Caco-2 (cell line): ENCODE measurements at regions of chr15 and their contacts with region 1.

Region 1: DNA sequence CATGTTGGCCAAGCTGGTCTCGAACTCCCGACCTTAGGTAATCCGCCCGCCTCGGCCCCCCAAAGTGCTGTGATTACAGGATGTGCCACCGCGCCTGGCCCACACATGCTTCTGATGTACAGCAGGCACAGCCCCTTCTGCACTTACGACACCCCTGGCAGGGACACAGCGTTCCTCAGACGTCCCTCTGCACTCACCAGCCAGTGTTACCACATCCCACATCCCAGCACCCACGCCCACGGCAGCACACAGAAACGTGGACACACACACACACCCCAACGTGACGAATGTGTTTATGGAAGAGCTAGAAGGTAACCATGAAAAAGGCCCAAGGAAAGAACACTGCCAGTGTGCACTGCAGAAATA is 576 bp upstream of the RPAP1 start:
- DNase-seq: no peak
- H3K4me3 ChIP-seq: peak overlapping the region; percentile 15; the same call in 1 of the 2 replicates
- H3K4me3 Mint-ChIP-seq: peak overlapping the region; percentile 86
- H3K27ac Mint-ChIP-seq: peak overlapping the region; percentile 88
- H3K4me1 ChIP-seq: peaks cover 19% of the 10 kb centered on the region
- H3K4me1 Mint-ChIP-seq: peaks cover 14% of the 10 kb centered on the region
- H3K27me3 ChIP-seq: no peaks in the 10 kb centered on the region
- H3K27me3 Mint-ChIP-seq: no peaks in the 10 kb centered on the region
- CTCF ChIP-seq: no peak

Region 2: DNA sequence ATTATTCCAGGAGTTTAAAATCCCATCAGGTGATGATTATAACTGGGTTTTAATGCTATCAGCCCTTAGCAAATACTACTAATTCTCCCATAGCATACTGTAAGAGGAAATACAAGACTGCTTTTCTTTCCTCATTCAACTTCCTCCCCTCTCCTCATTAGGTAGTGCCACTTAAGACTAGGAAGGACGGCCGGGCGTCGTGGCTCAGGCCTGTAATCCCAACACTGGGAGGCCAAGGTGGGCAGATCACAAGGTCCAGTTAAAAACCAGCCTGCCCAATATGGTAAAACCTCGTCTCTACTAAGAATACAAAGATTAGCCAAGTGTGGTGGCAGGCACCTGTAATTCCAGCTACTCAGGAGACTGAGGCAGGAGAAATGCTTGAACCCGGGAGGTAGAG is 157.0 kb before region 1 on chr15:
- CTCF ChIA-PET with region 1: no interaction called
- POLR2A ChIA-PET with region 1: no interaction called
- intact Hi-C with region 1: no loop called
- DNase-seq: no peak
- H3K4me3 ChIP-seq: no peak overlapping the region
- H3K4me3 Mint-ChIP-seq: no peak overlapping the region
- H3K27ac Mint-ChIP-seq: no peak overlapping the region
- H3K4me1 ChIP-seq: no peaks in the 10 kb centered on the region
- H3K4me1 Mint-ChIP-seq: no peaks in the 10 kb centered on the region
- H3K27me3 ChIP-seq: no peaks in the 10 kb centered on the region
- H3K27me3 Mint-ChIP-seq: no peaks in the 10 kb centered on the region
- CTCF ChIP-seq: no peak

Region 3: GRCh38 chr15:41493205-41493901 is 51.3 kb before region 1 on chr15 and contains the start of gene ITPKA:
- CTCF ChIA-PET with region 1: interaction called, 3 read pairs
- POLR2A ChIA-PET with region 1: interaction called, 3 read pairs
- intact Hi-C with region 1: loop called (anchors 1 kb)
- DNase-seq: peak; percentile 90 to 92
- H3K4me3 ChIP-seq: peak within 1 kb of the TSS; percentile 81
- H3K4me3 Mint-ChIP-seq: peak within 1 kb of the TSS; percentile 95
- H3K27ac Mint-ChIP-seq: peak within 1 kb of the TSS; percentile 4
- H3K4me1 ChIP-seq: peaks cover 18% of the 10 kb centered on the region
- H3K4me1 Mint-ChIP-seq: peaks cover 14% of the 10 kb centered on the region
- H3K27me3 ChIP-seq: no peaks in the 10 kb centered on the region
- H3K27me3 Mint-ChIP-seq: no peaks in the 10 kb centered on the region
- CTCF ChIP-seq: no peak
- total RNA-seq, gene ITPKA: 16.2 and 18.1 TPM in 2 replicates